Calu3 (cell line): ENCODE measurements at regions of chr15 and their contacts with region 1.

Region 1: GRCh38 chr15:29704950-29705597 is 117.2 kb downstream of the TJP1 start:
- DNase-seq: no peak
- H3K4me3 Mint-ChIP-seq: no peak overlapping the region
- H3K27ac Mint-ChIP-seq: no peak overlapping the region
- H3K4me1 Mint-ChIP-seq: no peaks in the 10 kb centered on the region
- H3K27me3 Mint-ChIP-seq: no peaks in the 10 kb centered on the region
- CTCF ChIP-seq: no peak

Region 2: GRCh38 chr15:29724026-29724425 is 19.0 kb after region 1 on chr15:
- CTCF ChIA-PET with region 1: no interaction called
- intact Hi-C with region 1: loop called (anchors 2 kb)
- DNase-seq: no peak
- H3K4me3 Mint-ChIP-seq: no peak overlapping the region
- H3K27ac Mint-ChIP-seq: no peak overlapping the region
- H3K4me1 Mint-ChIP-seq: no peaks in the 10 kb centered on the region
- H3K27me3 Mint-ChIP-seq: no peaks in the 10 kb centered on the region
- CTCF ChIP-seq: no peak

Region 3: DNA sequence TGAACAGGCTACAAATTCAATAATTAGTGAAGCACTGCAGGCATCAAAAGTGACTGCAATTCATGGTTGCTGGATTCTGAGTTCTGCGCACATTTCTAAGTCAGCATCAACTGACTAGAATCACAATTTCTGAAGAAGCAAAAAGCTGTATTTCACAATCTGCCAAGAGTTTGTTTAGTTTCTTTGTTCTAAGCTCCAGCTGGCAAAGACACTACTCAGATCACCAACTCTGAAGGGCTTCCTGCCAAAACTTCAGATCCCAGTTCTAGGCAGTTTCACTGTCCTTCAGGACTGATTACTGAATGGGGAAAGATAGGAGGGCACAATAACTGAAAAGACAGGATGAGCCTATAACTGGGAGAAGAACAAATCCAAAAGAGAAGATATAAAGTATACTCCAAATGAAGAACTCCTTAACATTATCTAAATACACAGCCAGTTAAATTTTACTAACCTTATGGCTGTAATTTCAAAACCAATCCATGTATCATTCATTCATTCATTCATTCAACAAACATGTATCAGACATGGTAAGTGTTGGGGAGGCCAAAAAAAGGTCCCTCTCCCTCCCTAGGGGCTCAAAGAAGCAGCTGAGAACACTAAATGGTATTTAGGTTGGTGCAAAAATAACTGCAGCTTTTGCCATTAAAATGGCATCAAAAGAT is 100.1 kb after region 1 on chr15:
- CTCF ChIA-PET with region 1: no interaction called
- intact Hi-C with region 1: no loop called
- DNase-seq: no peak
- H3K4me3 Mint-ChIP-seq: no peak overlapping the region
- H3K27ac Mint-ChIP-seq: no peak overlapping the region
- H3K4me1 Mint-ChIP-seq: peaks cover 14% of the 10 kb centered on the region
- H3K27me3 Mint-ChIP-seq: no peaks in the 10 kb centered on the region
- CTCF ChIP-seq: no peak